Naive thymus-derived CD8-positive, alpha-beta T cell (primary cell): ENCODE measurements at regions of chr21 and their contacts with region 1.

Region 1: GRCh38 chr21:33588485-33589335 is at the start of gene DONSON:
- DNase-seq: peak; percentile 74 to 95 (median 88)
- ATAC-seq: peak; percentile 92
- H3K4me3 Mint-ChIP-seq: peak within 1 kb of the TSS; percentile 89 to 97 (median 94)
- H3K27ac Mint-ChIP-seq: peak within 1 kb of the TSS; percentile 59 to 96 (median 92)
- H3K4me1 Mint-ChIP-seq: peaks cover 10 to 16% (median 14%) of the 10 kb centered on the region in 4 donors
- H3K27me3 Mint-ChIP-seq: no peaks in the 10 kb centered on the region
- polyA plus RNA-seq, gene DONSON: 1.9 to 4.7 (median 2.2) TPM

Region 2: GRCh38 chr21:33479679-33480480 is 108.8 kb before region 1 on chr21 and contains the start of gene TMEM50B:
- POLR2A ChIA-PET with region 1: interaction called, 20 read pairs
- DNase-seq: peak; percentile 89 to 98 (median 94)
- ATAC-seq: peak; percentile 87 to 88
- H3K4me3 Mint-ChIP-seq: peak within 1 kb of the TSS; percentile 81 to 97 (median 94)
- H3K27ac Mint-ChIP-seq: peak within 1 kb of the TSS; percentile 65 to 98 (median 96)
- H3K4me1 Mint-ChIP-seq: peaks cover 11 to 32% (median 24%) of the 10 kb centered on the region in 4 donors
- H3K27me3 Mint-ChIP-seq: no peaks in the 10 kb centered on the region
- polyA plus RNA-seq, gene TMEM50B: 42.3 to 47.9 (median 45.4) TPM

Region 3: GRCh38 chr21:33608559-33608958 is 19.8 kb after region 1 on chr21:
- POLR2A ChIA-PET with region 1: interaction called, 16 read pairs
- DNase-seq: no peak
- ATAC-seq: no peak
- H3K4me3 Mint-ChIP-seq: no peak overlapping the region
- H3K27ac Mint-ChIP-seq: peak overlapping the region in 4 of 10 donors; percentile 22 to 76 (median 40)
- H3K4me1 Mint-ChIP-seq: peaks cover 0 to 3% (median 0%) of the 10 kb centered on the region in 4 donors
- H3K27me3 Mint-ChIP-seq: no peaks in the 10 kb centered on the region